ENCODE measurements at regions of chr3 and their contacts with region 1.

Region 1: DNA sequence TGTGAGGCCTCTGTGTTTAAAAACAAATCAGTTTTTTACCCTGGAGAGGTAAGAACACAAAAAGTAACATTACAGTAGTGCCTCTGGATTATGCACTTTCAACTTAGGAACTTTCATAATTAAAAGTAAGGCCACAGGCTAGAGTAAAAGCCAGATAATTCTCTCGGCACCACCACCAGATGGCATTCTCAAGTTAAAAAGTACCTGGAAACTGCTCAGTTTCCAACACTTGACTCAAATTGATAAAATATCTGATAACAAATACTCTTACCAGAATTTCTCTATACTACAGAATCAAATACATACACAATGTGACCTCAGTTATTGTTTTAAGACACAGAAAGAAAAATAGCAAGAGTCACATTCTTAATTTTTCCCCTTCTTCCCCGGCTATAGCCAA is 19.9 kb downstream of the SPICE1 start:
- DNase-seq: no peak
- ATAC-seq: no peak
- H3K4me3 ChIP-seq: no peak overlapping the region
- H3K27ac ChIP-seq: no peak overlapping the region
- H3K4me1 ChIP-seq: no peaks in the 10 kb centered on the region
- H3K27me3 ChIP-seq: no peaks in the 10 kb centered on the region

Region 2: DNA sequence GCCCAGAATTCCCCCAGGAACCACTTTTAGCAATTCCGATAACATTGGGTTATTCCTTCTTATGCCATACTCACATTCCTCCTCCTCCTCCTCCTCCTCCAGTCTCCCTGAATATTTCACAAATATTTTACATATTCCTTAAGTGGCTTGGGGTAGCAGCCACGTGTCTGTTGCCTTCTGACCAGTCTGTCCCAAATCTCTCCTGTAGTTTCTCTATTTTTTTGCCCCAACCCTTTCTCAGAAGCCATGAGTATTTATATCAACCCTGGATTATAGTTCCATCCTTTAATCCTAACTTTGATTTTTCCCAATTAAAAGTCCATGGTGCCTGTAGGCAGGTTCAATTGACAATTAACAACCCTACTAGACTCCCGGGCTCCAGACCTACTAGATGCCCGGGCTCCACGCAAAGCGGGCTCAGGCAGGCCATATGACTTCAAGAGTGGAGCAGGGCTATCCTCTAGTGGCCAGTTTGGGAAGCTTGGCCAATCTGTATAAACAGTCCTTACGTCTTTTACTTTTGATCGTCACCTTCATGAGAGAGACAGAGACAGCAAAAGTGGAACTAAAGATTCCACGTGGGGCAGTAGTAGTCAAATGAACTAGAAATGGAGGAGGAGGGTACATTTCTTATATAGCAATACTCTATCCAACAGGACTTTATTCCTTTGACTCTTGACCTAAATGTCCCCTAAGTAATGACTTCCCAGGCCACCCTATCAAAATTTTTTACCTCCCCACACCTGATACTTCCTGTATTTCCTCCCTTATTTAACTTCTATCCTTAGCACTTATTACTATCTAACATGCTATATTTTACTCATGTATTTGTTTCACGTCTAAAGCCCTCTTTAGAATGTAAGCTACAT is 131.7 kb after region 1 on chr3:
- intact Hi-C with region 1: loop called (anchors 2 kb)
- DNase-seq: peak; percentile 69 to 79
- ATAC-seq: peak; percentile 86
- H3K4me3 ChIP-seq: no peak overlapping the region
- H3K27ac ChIP-seq: no peak overlapping the region
- H3K4me1 ChIP-seq: no peaks in the 10 kb centered on the region
- H3K27me3 ChIP-seq: no peaks in the 10 kb centered on the region

Region 3: GRCh38 chr3:113795693-113796092 is 300.7 kb after region 1 on chr3:
- intact Hi-C with region 1: no loop called
- DNase-seq: no peak
- ATAC-seq: no peak
- H3K4me3 ChIP-seq: no peak overlapping the region
- H3K27ac ChIP-seq: no peak overlapping the region
- H3K4me1 ChIP-seq: no peaks in the 10 kb centered on the region
- H3K27me3 ChIP-seq: no peaks in the 10 kb centered on the region

Measured in aorta (tissue), 5 donors.